CD14-positive monocyte (primary cell): ENCODE measurements at regions of chr1 and their contacts with region 1.

Region 1: GRCh38 chr1:168572633-168573032 is 3.8 kb upstream of the XCL1 start:
- DNase-seq: no peak
- H3K4me3 ChIP-seq: no peak overlapping the region
- H3K4me3 Mint-ChIP-seq: no peak overlapping the region
- H3K27ac ChIP-seq: no peak overlapping the region
- H3K27ac Mint-ChIP-seq: no peak overlapping the region
- H3K4me1 ChIP-seq: peaks cover 0 to 1% of the 10 kb centered on the region in 2 donors
- H3K4me1 Mint-ChIP-seq: peaks cover 6% of the 10 kb centered on the region
- H3K27me3 ChIP-seq: no peaks in the 10 kb centered on the region
- H3K27me3 Mint-ChIP-seq: peaks cover 0 to 2% (median 0%) of the 10 kb centered on the region in 3 donors
- CTCF ChIP-seq: no peak

Region 2: GRCh38 chr1:168342572-168343280 is 229.9 kb before region 1 on chr1:
- intact Hi-C with region 1: loop called (anchors 10 kb)
- DNase-seq: peak; percentile 80 to 81 (median 81)
- H3K4me3 ChIP-seq: peak overlapping the region in 1 of 3 experiments; percentile 44
- H3K4me3 Mint-ChIP-seq: peak overlapping the region; percentile 27 to 71
- H3K27ac ChIP-seq: no peak overlapping the region
- H3K27ac Mint-ChIP-seq: peak overlapping the region in 1 of 7 donors; percentile 11
- H3K4me1 ChIP-seq: peaks cover 7 to 8% of the 10 kb centered on the region in 2 donors
- H3K4me1 Mint-ChIP-seq: peaks cover 17% of the 10 kb centered on the region
- H3K27me3 ChIP-seq: no peaks in the 10 kb centered on the region
- H3K27me3 Mint-ChIP-seq: peaks cover 0 to 4% (median 3%) of the 10 kb centered on the region in 3 donors
- CTCF ChIP-seq: peak; percentile 79

Region 3: GRCh38 chr1:168439456-168440375 is 132.9 kb before region 1 on chr1:
- intact Hi-C with region 1: loop called (anchors 5 kb)
- DNase-seq: peak; percentile 52 to 71 (median 67)
- H3K4me3 ChIP-seq: peak overlapping the region in 1 of 3 experiments; percentile 58
- H3K4me3 Mint-ChIP-seq: peak overlapping the region; percentile 75 to 88
- H3K27ac ChIP-seq: no peak overlapping the region
- H3K27ac Mint-ChIP-seq: no peak overlapping the region
- H3K4me1 ChIP-seq: peaks cover 8 to 9% of the 10 kb centered on the region in 2 donors
- H3K4me1 Mint-ChIP-seq: peaks cover 14% of the 10 kb centered on the region
- H3K27me3 ChIP-seq: no peaks in the 10 kb centered on the region
- H3K27me3 Mint-ChIP-seq: peaks cover 0 to 4% (median 3%) of the 10 kb centered on the region in 3 donors
- CTCF ChIP-seq: peak; percentile 87